Right cardiac atrium (tissue), 5 donors: ENCODE measurements at regions of chr16 and their contacts with region 1.

Region 1: DNA sequence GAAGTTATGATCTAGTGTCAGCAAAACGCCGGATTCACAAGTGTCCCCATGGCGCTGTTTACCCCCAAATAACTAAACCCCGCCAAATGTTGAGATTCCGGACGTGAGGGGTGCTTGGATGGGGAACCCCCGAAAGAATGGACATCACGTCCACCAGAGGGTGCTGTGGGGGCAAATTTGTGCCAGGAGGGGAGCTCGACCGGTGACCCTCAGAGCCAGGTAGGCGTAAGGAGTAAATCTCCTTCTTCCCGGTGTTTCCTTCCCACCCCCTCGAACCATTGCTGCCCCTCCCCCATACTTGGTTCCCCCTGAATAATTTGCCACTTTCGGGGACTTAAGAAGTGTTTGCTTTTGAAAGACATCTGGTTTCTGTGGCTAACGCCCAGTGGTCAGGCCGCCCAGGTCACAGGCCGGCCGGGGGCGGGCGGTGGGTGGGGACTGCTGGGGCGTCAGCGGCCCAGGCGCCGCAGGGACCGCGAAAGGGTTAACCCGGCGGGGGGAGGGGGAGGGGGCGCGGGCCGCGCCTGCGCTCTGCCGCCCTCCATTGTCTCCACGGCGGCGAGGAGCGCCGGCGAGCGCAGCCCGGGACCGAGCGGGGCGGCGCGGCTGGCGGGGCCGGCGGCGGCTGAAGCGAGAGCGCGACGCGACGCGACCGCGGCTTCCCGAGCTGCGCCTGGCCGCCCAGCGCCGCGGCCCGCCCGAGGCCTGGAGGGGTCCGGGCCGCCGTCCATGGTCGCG is at the start of gene ZNRF1:
- DNase-seq: peak; percentile 89 to 95 (median 93)
- ATAC-seq: peak; percentile 91 to 92
- H3K4me3 ChIP-seq: peak within 1 kb of the TSS; percentile 99
- H3K27ac ChIP-seq: peak within 1 kb of the TSS; percentile 89
- H3K4me1 ChIP-seq: peaks cover 2% of the 10 kb centered on the region
- H3K27me3 ChIP-seq: no peaks in the 10 kb centered on the region
- total RNA-seq, gene ZNRF1: 10.8 to 19.6 (median 13.7) TPM

Region 2: DNA sequence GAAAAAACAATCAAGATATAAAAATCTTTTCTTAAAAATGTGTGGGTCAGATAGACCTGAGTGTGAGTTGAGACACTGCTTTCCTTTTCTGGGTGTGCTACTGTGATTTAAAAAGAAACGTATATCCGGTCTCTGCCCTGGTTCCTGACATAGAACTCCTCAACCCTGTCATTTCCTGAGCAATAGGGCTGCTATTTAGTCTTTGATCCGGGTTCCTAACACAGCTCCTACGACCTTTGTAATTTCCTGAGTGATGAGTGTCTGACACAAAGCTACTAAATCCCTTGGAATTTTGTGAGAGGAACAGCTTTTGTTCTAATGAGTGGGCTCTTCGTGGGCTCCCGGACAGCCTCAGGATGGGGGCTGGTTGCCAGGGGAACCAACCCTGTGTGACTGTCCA is 130.1 kb before region 1 on chr16:
- intact Hi-C with region 1: no loop called
- DNase-seq: no peak
- ATAC-seq: peak; percentile 74 to 96
- H3K4me3 ChIP-seq: no peak overlapping the region
- H3K27ac ChIP-seq: peak overlapping the region; percentile 75
- H3K4me1 ChIP-seq: no peaks in the 10 kb centered on the region
- H3K27me3 ChIP-seq: no peaks in the 10 kb centered on the region

Region 3: GRCh38 chr16:75110637-75111513 is 112.2 kb after region 1 on chr16:
- intact Hi-C with region 1: loop called (anchors 2 to 5 kb)
- DNase-seq: peak; percentile 88 to 96 (median 94)
- ATAC-seq: peak; percentile 73 to 76
- H3K4me3 ChIP-seq: no peak overlapping the region
- H3K27ac ChIP-seq: peak overlapping the region; percentile 79
- H3K4me1 ChIP-seq: peaks cover 5% of the 10 kb centered on the region
- H3K27me3 ChIP-seq: no peaks in the 10 kb centered on the region